ENCODE measurements at regions of chr10 and their contacts with region 1.

Region 1: DNA sequence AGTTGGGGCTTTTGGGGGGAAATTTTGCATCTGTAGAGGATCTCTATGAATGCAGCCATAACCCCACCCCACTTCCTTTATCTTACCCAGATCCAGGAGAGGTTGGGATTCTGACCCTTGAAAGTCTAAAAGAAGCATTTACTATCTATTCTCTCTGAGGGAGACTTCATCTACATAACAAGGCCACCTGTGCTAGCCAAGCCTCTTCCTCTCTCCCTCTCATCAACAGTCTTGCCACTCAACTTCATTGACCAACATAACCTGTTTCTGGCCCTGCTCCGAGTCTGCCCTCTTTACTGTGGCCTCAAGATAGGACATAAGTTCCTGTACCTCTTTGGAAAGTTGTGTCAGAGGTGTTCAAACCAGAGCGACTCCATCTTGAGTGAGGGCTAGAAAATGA is 19.4 kb downstream of the TUBAL3 start:
- DNase-seq: no peak
- H3K4me3 ChIP-seq: no peak overlapping the region
- H3K27ac ChIP-seq: no peak overlapping the region
- H3K4me1 ChIP-seq: peaks cover 0 to 3% of the 10 kb centered on the region in 2 donors
- H3K27me3 ChIP-seq: no peaks in the 10 kb centered on the region
- CTCF ChIP-seq: no peak
- POLR2A ChIP-seq: no peak

Region 2: DNA sequence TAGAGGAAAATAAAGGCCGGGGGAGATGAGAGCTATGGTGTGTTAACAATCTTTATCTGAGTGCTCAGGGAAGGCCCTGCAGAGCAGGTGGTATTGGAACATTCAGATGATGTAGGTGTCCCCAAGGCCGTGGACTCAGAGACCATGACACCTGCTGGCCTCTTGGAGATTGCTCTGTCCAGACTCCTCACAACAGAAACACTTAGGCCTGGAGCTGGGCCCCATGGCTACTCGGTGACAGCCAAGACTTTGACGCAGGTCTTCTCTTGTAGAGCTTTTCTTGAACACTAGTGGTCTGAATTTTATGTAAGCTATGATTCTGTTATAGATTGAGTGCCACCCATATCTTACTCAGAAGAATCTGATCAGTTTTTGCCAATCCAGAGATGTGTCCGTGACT is 545.8 kb before region 1 on chr10:
- intact Hi-C with region 1: loop called (anchors 10 kb)
- DNase-seq: no peak
- H3K4me3 ChIP-seq: no peak overlapping the region
- H3K27ac ChIP-seq: no peak overlapping the region
- H3K4me1 ChIP-seq: peaks cover 0 to 12% of the 10 kb centered on the region in 2 donors
- H3K27me3 ChIP-seq: no peaks in the 10 kb centered on the region
- CTCF ChIP-seq: no peak
- POLR2A ChIP-seq: no peak

Region 3: GRCh38 chr10:5252177-5253015 is 132.8 kb before region 1 on chr10:
- intact Hi-C with region 1: no loop called
- DNase-seq: no peak
- H3K4me3 ChIP-seq: no peak overlapping the region
- H3K27ac ChIP-seq: no peak overlapping the region
- H3K4me1 ChIP-seq: no peaks in the 10 kb centered on the region
- H3K27me3 ChIP-seq: no peaks in the 10 kb centered on the region
- CTCF ChIP-seq: no peak
- POLR2A ChIP-seq: no peak

Measured in thyroid gland (tissue), 4 donors.